ENCODE measurements at regions of chr10 and their contacts with region 1.

Region 1: DNA sequence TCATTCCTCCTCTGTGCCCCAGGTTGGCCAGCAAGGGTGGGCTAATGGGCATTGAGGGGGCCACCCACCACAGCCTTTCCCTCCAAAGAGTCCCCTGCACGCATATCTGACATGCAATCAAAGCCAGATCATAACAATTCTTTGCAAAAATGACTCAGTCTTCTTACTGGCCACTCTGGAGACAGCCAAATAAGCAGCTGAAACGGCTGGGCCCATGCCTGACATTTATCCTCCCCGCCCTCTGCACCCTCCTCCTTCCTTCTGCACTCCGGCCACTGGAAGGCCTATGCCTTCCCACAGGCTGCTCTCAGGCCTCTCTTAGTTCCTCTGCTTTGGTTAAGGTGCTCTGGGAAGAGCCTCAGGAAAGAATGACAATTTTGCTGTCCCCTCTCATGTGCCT is 29.2 kb upstream of the NPFFR1 start:
- DNase-seq: no peak
- H3K4me3 ChIP-seq: no peak overlapping the region
- CTCF ChIP-seq: no peak
- POLR2A ChIP-seq: no peak

Region 2: GRCh38 chr10:71790749-71791552 is 1478.0 kb after region 1 on chr10:
- intact Hi-C with region 1: loop called (anchors 5 kb)
- DNase-seq: no peak
- H3K4me3 ChIP-seq: no peak overlapping the region
- CTCF ChIP-seq: no peak
- POLR2A ChIP-seq: no peak